ENCODE measurements at regions of chr3 and their contacts with region 1.

Region 1: DNA sequence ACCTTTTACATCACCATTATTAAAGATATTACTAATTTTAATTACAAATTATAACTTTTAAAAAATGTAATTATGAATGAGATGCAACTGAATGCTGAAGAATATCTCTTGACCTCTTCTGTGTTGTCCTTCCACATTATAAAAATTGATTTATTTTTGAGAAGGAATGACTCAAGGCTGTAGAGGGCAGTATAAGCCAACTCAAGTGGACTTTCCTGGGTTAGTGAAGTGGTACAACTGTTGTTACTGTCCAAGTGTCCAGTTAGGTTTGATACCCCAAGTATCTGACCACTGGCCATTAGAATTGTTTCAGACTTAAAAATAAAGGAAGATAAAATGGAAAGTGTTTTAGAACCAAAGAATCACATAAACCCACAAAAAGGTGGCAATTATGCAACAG is 51.9 kb downstream of the BBX start:
- DNase-seq: no peak
- ATAC-seq: peak; percentile 59

Region 2: DNA sequence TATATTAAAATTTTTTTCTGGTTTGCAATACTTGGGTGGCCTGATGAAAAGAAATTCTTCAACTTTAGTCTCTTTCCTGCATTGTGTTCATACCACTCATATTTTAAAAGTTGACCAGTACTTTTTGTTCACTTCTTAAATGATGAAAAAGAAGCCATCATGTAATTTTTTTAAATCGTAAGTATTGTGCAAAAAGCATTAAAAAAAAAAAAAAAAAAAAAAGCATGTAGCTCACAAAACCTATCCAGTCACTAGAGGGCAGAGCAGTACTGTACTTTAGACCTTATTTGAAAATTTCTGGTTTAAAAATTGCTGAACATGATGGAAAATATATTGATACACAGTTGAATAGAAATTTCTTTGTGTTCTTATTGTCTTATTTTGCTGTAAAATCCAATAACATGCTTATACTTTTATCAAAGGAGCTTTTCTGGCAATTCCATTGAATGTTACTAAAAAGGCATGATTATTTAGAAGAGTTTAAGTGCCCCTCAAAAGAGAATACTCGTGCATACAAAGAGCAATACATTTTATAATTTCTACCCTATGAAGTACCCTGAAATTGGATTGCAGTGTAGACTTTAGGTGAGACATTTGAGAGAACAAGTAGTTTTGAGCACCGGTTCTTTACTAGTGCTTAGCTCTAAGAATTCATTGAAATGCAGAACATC is 85.8 kb after region 1 on chr3:
- intact Hi-C with region 1: loop called (anchors 5 kb)
- DNase-seq: no peak
- ATAC-seq: no peak

Region 3: DNA sequence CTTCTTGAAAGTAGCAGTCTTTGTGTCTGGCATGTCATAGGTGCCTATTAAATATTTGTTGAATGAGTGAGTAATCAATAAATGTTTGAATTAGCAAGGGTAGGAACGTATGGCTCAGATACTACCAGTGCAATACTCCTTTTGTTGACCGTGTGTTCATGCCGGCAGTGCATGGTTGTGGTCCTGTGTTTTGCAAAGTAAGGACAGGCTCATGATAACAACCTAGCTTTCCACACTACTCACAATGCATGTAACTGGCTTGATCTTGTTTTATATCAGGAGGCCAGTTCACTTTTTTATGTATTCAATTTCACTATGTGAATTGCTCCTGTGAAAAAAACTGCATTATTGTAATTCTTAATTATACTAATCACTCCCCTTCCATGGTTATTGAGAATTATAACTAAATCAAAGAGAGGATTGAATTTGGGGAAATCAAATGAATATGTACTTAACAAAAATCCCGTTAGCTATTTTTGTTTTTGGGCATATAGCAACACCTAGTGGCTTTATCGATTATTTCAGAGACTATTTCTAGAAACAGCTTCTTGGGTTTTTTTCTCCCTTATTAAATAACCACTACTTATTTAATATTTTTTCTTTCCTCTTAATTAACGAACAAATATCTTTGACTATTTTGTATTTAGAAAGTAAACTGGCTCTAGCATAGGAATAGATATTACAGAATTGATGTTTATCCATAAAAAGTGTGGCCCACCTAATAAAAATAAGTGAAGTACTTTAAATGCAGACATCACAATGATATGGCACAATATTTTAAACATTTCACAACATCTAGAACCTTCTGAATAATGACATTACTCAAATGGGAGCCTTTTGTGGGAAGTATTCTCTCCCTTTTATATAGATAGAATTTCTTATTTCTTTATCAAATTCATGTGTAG is 166.6 kb after region 1 on chr3:
- intact Hi-C with region 1: loop called (anchors 2 kb)
- DNase-seq: no peak
- ATAC-seq: no peak

Region 4: DNA sequence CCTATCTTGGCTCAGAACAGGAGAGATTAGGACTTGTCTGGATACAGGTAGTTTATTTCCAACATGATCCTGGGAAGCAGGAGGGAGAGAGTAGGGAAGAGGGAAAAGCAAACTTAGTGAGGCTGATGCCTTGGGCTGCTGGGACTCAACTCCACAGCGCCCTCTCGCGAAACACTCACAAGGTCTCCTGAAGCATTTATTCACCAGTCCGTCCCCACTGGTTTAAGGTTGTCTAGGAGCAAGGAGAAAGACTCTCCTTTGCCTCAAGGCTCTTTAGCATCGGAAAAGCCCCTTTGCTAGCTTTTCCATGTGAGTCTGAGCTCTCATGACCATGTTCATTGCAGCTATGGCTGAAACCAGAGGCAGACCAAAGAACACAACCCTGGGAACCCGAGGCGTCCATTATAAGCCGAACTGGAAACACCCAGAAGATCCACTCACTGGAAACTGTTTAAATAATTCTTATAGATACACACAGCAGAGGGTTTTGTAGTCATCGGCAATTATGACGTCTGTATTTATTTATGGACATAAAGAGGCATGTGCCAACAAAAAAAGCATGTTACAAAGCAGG is 271.7 kb after region 1 on chr3:
- intact Hi-C with region 1: loop called (anchors 2 kb)
- DNase-seq: peak; percentile 72
- ATAC-seq: peak; percentile 72

Region 5: DNA sequence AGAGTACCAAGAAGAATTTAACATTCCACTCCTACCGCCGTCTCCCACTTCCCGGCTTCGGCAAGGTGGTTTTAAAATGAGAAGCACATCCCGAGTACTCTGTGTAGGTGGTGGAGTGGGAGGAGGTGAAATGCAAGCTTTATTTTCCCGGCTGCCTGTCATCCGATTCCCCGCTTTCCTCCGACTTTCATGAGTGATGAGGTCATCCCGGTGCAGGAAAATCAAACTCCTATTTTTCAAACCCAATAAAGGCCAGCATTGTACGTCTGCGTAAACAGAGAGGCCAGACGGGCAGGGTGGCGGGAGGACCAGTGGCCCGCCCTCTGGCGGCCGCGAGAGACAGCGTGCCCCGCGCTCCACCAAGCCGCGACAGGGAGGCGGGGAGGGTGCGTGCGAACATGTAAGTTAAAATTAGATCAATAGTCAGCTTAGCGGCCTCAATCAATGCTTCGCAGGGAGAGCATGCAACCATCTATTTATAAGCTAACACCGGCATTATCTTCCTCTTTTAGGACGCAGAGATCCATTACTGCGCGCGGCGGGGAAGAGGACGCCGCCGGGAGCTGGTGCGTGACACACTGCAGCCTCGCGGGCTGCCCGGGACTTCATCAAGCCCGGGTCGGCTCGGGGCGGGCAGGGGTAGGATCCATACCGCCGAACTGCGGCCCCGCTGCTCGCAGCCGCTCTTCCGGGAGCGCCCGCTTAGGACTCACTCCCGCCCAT is 352.9 kb after region 1 on chr3:
- intact Hi-C with region 1: loop called (anchors 10 kb)
- DNase-seq: peak; percentile 86
- ATAC-seq: peak; percentile 96